WTC11 (cell line): ENCODE measurements at regions of chr2 and their contacts with region 1.

Region 1: GRCh38 chr2:95345566-95346230 is 48.6 kb downstream of the KCNIP3 start:
- DNase-seq: peak; percentile 89
- ATAC-seq: peak; percentile 85
- H3K4me3 Mint-ChIP-seq: peak overlapping the region; percentile 73
- H3K27ac Mint-ChIP-seq: no peak overlapping the region
- H3K4me1 Mint-ChIP-seq: no peaks in the 10 kb centered on the region
- H3K27me3 Mint-ChIP-seq: peaks cover 67% of the 10 kb centered on the region
- CTCF ChIP-seq: peak; percentile 79

Region 2: GRCh38 chr2:95329891-95330780 is 15.6 kb before region 1 on chr2:
- CTCF ChIA-PET with region 1: interaction called, 11 read pairs
- POLR2A ChIA-PET with region 1: no interaction called
- DNase-seq: no peak
- ATAC-seq: peak; percentile 23; the same call in 1 of the 2 replicates
- H3K4me3 Mint-ChIP-seq: no peak overlapping the region
- H3K27ac Mint-ChIP-seq: peak overlapping the region; percentile 10; the same call in 1 of the 2 replicates
- H3K4me1 Mint-ChIP-seq: 0 out of 2 replicates have a peak, but pooled peaks cover 2% of the 10 kb centered on the region
- H3K27me3 Mint-ChIP-seq: no peaks in the 10 kb centered on the region; the same call in 1 of the 2 replicates
- CTCF ChIP-seq: no peak

Region 3: DNA sequence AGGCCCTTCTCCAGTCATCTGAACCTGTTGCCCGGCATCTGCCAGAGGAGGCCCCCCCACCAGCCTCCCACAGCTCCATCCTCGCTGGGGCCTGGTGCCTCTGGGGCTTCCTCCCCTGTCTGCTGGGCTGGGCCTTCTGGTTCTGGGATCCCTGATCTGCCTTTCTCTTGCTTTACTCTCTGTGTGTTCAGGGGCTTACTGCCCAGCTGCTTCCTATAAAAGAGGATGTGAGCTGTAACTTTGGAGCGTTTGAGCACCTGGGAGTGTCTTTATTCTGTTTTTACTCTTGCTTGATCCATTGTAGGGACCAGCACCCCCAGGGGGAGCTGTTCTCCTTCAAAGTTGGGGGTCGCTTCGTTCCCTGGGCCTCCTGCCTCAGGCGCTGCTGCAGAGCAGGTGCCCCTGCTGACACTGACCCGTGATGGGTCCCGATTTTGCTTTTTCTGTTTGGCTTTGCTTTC is 33.7 kb after region 1 on chr2:
- CTCF ChIA-PET with region 1: interaction called, 10 read pairs
- POLR2A ChIA-PET with region 1: no interaction called
- DNase-seq: peak; percentile 66
- ATAC-seq: peak; percentile 84
- H3K4me3 Mint-ChIP-seq: no peak overlapping the region
- H3K27ac Mint-ChIP-seq: no peak overlapping the region
- H3K4me1 Mint-ChIP-seq: peaks cover 11% of the 10 kb centered on the region
- H3K27me3 Mint-ChIP-seq: no peaks in the 10 kb centered on the region
- CTCF ChIP-seq: 0 out of 2 replicates have a peak, but pooled peaks have one; percentile 33